ENCODE measurements at regions of chr4 and their contacts with region 1.

Region 1: DNA sequence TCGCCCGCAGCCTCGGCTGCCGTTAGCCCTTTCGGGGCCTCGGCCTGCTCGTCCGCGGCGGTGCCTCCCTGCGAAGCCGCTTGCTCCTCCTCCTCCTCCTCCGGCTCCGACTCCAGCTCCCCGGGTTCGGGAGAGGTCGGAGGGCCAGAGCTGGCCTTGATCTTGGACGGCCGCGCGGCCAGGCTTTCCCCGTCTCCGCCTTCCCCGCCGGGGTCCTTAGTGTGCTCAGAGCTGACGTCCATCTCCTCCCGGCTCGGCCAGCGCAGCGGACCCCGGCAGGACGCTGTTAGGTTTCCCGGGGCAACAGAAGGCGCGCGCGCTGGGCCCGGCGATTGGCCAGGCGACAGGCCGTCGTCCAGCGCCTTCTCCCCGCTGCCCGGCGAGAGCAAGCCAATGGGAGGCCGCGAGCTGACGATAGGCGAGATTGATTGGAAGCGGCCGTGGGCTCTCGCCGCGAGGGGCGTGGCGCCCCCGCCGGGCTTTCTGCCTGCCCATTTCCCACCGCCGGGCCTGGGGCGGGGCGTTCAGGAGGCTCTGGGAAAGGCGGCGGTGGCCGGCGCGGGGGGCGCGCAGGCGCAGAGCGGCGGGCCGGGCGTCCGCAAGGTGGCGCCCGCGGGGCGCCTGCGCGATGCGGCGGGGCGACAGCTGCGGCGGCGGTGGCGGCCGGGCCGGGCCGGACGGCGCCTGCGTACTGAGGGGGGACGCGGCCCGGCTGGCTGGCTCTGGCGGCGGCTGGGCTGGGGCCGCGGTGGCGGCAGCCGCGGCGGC is at the start of gene TADA2B:
- DNase-seq: peak; percentile 53
- ATAC-seq: peak; percentile 93
- H3K4me3 ChIP-seq: peak within 1 kb of the TSS; percentile 76 to 80
- H3K27ac ChIP-seq: peak within 1 kb of the TSS; percentile 81
- H3K4me1 ChIP-seq: peaks cover 30% of the 10 kb centered on the region
- H3K27me3 ChIP-seq: no peaks in the 10 kb centered on the region
- CTCF ChIP-seq: peak; percentile 83; the same call in 1 of the 2 replicates
- total RNA-seq, gene TADA2B: 17.6 TPM

Region 2: DNA sequence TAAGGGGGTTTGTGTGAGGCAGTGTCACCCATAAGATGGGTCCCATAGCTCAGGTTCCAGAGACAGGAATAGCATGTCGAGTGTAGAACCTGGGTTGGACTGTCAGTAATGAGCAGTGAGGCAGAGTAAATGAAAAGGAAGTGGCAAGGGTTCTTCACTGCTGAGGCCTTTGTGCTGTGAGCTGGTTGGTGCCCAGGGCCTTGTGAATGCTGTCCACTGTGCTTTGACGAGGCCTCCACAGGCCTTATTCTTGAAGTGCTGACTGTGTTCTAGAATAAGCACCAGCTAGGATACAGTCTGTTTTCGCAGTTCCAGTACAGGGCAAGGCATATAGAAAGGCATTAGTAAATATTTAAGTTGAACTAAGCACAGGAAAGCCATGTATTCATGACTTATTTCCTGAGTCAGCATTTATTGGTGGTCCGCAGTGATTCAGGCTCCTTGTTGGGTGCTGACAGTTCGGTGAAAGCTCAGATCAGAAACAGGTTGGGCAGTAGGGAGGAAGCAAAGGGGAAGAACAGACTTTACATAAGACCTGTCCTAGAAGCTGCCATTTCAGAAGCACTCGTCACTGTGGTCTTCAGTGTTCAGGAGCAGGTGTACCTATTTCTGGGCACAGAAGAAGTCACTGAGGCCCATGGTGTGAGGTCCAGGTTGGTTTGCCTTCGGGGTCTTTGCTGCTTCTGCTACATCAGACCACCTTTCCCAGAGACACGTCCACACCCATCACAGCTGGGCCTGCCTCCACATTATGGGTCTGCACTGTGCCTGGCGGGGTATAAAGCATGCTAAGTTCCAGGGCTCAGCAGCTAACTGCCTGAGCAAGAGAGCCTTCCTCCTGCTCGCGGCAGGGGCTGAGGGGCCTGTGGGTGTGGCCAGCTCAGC is 25.2 kb before region 1 on chr4:
- CTCF ChIA-PET with region 1: no interaction called
- POLR2A ChIA-PET with region 1: interaction called, 15 read pairs
- in situ Hi-C with region 1: no loop called
- intact Hi-C with region 1: no loop called
- DNase-seq: no peak
- ATAC-seq: no peak
- H3K4me3 ChIP-seq: no peak overlapping the region
- H3K27ac ChIP-seq: no peak overlapping the region
- H3K4me1 ChIP-seq: peaks cover 28% of the 10 kb centered on the region
- H3K27me3 ChIP-seq: no peaks in the 10 kb centered on the region
- CTCF ChIP-seq: no peak

Measured in Panc1 (cell line).